Transverse colon (tissue), 4 donors: ENCODE measurements at regions of chr17 and their contacts with region 1.

Region 1: GRCh38 chr17:21742326-21742725 is 50.0 kb downstream of the KCNJ18 start:
- DNase-seq: no peak
- H3K4me3 ChIP-seq: no peak overlapping the region
- H3K27ac ChIP-seq: no peak overlapping the region
- H3K4me1 ChIP-seq: no peaks in the 10 kb centered on the region
- H3K27me3 ChIP-seq: no peaks in the 10 kb centered on the region
- CTCF ChIP-seq: no peak
- EP300 ChIP-seq: no peak
- POLR2A ChIP-seq: no peak

Region 2: GRCh38 chr17:21345236-21345635 is 397.1 kb before region 1 on chr17:
- in situ Hi-C with region 1: no loop called
- intact Hi-C with region 1: loop called (anchors 10 kb)
- DNase-seq: no peak
- H3K4me3 ChIP-seq: no peak overlapping the region
- H3K27ac ChIP-seq: no peak overlapping the region
- H3K4me1 ChIP-seq: no peaks in the 10 kb centered on the region
- H3K27me3 ChIP-seq: no peaks in the 10 kb centered on the region
- CTCF ChIP-seq: no peak
- EP300 ChIP-seq: no peak
- POLR2A ChIP-seq: no peak

Region 3: GRCh38 chr17:21511363-21512198 is 230.7 kb before region 1 on chr17:
- in situ Hi-C with region 1: no loop called
- intact Hi-C with region 1: no loop called
- DNase-seq: peak; percentile 85
- H3K4me3 ChIP-seq: peak overlapping the region; percentile 34 to 70 (median 40)
- H3K27ac ChIP-seq: peak overlapping the region; percentile 45 to 55 (median 53)
- H3K4me1 ChIP-seq: peaks cover 0 to 20% (median 4%) of the 10 kb centered on the region in 4 donors
- H3K27me3 ChIP-seq: peaks cover 7% of the 10 kb centered on the region
- CTCF ChIP-seq: peak; percentile 69 to 82 (median 73)
- EP300 ChIP-seq: no peak
- POLR2A ChIP-seq: no peak